AG04449 (cell line): ENCODE measurements at regions of chr12 and their contacts with region 1.

Region 1: GRCh38 chr12:43444940-43445564 is 107.0 kb downstream of the ADAMTS20 start:
- DNase-seq: peak; percentile 4
- H3K4me3 ChIP-seq: no peak overlapping the region
- CTCF ChIP-seq: peak; percentile 67

Region 2: DNA sequence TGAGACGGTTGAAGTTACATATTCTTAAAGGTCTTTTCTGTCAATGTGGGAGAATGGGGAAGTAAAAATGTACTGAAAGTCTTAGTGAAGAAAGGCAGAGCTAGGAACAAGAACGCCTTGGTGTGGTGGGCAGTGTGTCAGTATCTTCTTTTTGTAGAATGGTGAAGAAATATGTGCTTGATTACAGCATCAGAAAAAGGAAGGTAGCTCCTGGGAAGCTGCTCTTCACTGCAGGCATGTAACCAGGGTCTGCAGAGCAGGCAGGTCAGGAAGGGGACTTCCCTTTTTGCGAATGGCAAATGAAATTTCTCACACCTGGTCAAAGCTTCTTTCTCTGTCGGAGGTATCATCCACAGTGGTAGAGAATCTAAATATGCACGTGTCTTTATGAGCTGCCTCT is 119.3 kb before region 1 on chr12:
- CTCF ChIA-PET with region 1: no interaction called
- POLR2A ChIA-PET with region 1: no interaction called
- DNase-seq: no peak
- H3K4me3 ChIP-seq: no peak overlapping the region
- CTCF ChIP-seq: no peak

Region 3: DNA sequence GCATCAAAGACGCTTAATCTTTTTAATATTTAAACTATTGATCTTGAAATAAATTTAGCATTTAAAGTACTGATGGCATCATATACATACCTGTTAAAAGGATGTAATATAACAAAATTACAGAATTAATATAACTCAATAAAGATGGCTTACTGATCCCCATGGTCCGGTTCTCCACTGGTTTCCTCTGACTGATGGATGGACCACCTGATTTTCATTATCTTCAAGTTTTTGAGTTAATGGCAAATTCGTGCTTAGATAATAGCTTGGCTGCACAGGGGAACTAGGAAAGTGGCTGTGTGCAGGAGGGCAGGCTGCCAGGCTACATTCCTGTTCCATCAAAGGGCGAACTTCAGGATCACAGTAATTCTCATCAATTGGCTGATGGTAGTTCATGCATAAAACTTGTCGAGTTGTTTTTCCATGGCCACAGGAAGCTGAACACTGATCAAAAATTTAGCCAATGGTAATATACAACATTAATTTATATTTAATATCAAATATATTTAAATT is 16.9 kb before region 1 on chr12:
- CTCF ChIA-PET with region 1: interaction called, 26 read pairs
- POLR2A ChIA-PET with region 1: no interaction called
- DNase-seq: no peak
- H3K4me3 ChIP-seq: no peak overlapping the region
- CTCF ChIP-seq: no peak

Region 4: DNA sequence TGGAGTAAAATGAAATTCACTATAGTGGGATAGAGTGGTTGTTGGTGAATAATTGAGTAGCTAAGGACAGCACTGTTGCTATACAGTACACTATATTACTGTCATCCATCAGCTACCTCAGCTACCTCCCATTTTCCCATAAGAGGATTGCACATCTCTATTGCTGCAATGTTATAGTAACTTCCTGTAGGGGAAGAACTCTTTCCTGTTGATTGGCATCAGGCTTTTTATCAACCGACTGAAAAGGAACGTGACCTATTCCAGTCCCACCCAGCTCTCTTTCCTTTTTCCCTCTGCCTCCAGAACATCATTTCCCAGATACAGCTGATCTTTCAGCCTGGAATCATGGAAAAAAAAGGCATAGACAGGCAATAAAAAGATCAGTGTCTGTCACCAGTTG is 10.4 kb before region 1 on chr12:
- CTCF ChIA-PET with region 1: interaction called, 26 read pairs
- POLR2A ChIA-PET with region 1: no interaction called
- DNase-seq: no peak
- H3K4me3 ChIP-seq: no peak overlapping the region
- CTCF ChIP-seq: no peak

Region 5: DNA sequence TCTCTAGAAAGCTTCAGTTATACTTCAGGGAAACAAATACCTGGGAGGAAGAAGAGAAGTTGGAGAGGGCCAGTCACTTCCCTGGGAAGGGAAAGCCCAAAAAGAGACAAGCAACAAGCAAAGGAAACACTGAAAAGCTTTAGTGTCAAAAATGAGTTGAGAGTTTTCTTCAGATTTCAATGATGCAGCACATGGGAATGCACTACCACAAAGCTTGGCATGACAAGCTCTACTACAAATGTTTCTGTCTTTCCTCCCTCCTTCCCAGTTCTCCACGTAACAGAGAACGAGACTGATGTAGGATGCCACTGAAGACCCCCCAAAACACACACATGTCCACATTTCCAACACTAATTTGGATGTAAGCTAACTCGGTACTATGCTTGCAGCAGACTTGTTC is 133.7 kb after region 1 on chr12:
- CTCF ChIA-PET with region 1: no interaction called
- POLR2A ChIA-PET with region 1: no interaction called
- DNase-seq: peak; percentile 5
- H3K4me3 ChIP-seq: no peak overlapping the region
- CTCF ChIP-seq: no peak